Calu3 (cell line): ENCODE measurements at regions of chr3 and their contacts with region 1.

Region 1: GRCh38 chr3:135895106-135895733 is 70.3 kb upstream of the PPP2R3A start:
- DNase-seq: peak; percentile 90
- H3K4me3 Mint-ChIP-seq: no peak overlapping the region
- H3K27ac Mint-ChIP-seq: peak overlapping the region; percentile 70
- H3K4me1 Mint-ChIP-seq: peaks cover 27% of the 10 kb centered on the region
- H3K27me3 Mint-ChIP-seq: no peaks in the 10 kb centered on the region
- CTCF ChIP-seq: peak; percentile 95

Region 2: DNA sequence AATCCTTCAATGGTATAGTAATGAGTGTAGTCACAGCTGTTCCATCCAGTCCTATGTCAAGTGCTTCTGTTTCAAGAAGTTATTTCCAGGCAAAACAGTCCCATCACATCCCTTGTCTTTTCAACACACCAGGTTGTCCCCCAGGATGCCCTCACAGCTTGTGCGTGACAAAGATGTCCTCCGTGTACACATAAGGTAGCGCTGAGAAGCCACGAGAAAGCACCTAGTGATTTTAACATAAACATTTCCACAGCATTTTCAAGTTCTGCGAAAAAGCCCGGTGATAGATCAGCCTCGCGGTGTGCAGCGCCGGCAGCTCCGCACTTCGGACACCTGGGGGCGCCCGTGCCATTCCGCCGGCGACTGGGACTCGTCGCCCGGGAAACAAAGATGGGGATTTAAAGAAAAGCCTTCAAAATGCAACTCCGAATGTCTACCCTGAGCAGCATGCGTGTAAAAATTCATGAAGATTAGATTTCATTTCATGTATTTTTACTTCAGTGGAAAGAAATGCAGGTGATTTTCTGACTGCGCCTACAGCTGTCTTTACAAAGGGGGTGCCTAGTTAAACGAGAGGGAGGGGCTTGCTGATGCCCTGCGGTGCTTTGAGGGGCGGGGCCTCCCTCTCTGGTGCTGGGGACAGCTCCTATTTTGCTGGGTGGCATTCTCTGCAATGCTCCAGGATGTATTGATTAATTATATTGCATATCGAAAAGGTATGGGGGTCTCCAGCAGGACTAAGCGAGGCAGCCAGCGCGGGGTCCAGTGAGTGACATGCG is 1294.3 kb before region 1 on chr3:
- CTCF ChIA-PET with region 1: no interaction called
- intact Hi-C with region 1: loop called (anchors 1 kb)
- DNase-seq: peak; percentile 94
- H3K4me3 Mint-ChIP-seq: no peak overlapping the region
- H3K27ac Mint-ChIP-seq: no peak overlapping the region
- H3K4me1 Mint-ChIP-seq: no peaks in the 10 kb centered on the region
- H3K27me3 Mint-ChIP-seq: peaks cover 94% of the 10 kb centered on the region
- CTCF ChIP-seq: peak; percentile 99

Region 3: DNA sequence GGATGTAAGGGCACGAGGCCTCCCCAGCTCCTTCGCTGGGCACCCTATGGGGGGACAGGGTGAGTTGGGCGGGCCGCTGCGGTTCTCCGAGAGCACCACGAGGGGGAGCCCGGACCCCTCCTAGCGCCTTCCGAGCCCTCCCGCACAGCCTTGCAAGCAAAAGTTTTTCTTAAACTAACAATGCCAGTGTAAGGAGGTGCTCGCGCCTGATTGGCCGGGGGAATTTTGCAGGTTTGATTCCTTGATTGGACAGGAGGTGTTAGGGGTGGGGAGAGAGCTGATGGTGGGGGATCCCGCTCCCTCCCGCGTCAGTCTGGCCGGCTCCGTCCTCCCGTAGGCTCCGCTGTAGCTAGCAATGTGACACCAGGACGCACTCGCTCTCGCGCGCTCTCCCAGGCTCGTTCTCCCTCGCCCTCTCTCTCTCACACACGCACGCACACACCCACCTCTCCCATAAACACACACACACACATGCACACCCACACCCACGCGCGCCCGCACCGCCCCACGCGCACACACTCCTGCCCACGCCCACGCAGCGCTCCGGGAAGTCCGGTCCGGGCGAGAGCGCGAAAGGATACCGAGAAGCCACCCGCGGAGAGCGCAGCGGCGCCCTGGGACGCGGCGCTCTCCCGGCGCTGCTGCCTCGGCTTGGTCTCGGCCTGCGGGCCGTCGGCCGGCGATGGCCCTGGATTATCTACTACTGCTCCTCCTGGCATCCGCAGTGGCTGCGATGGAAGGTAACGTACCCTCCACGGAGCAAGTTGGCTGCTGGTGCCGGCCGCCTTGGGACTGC is 1100.1 kb before region 1 on chr3 and contains the start of gene EPHB1:
- CTCF ChIA-PET with region 1: interaction called, 3 read pairs
- intact Hi-C with region 1: loop called (anchors 1 kb)
- DNase-seq: peak; percentile 92
- H3K4me3 Mint-ChIP-seq: peak within 1 kb of the TSS; percentile 91
- H3K27ac Mint-ChIP-seq: peak within 1 kb of the TSS; percentile 26
- H3K4me1 Mint-ChIP-seq: peaks cover 14% of the 10 kb centered on the region
- H3K27me3 Mint-ChIP-seq: peaks cover 89% of the 10 kb centered on the region
- CTCF ChIP-seq: peak; percentile 99
- total RNA-seq, gene EPHB1: 0.73 and 0.81 TPM in 2 replicates

Region 4: DNA sequence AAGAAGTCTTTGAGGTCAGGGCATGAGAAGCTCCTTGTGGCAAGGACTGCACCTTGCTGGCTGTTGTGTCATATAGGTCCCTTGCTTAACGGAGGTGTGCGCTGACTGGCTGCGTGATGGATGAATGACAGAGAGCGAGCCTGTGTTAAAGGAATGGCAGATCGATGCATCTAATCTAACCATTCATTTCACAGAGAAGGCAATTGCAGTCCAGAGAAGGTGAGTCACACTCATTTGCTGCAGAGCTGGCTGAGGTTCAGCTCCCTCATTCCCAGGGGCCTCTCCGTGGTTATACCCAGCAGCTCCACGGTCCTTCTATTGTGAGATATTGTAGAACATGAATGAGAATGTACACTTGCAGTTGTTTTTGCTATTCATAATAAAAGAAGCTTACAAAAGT is 810.8 kb before region 1 on chr3:
- CTCF ChIA-PET with region 1: no interaction called
- intact Hi-C with region 1: loop called (anchors 10 kb)
- DNase-seq: peak; percentile 50
- H3K4me3 Mint-ChIP-seq: no peak overlapping the region
- H3K27ac Mint-ChIP-seq: no peak overlapping the region
- H3K4me1 Mint-ChIP-seq: no peaks in the 10 kb centered on the region
- H3K27me3 Mint-ChIP-seq: peaks cover 38% of the 10 kb centered on the region
- CTCF ChIP-seq: no peak

Region 5: GRCh38 chr3:135503760-135504686 is 391.2 kb before region 1 on chr3:
- CTCF ChIA-PET with region 1: no interaction called
- intact Hi-C with region 1: loop called (anchors 10 kb)
- DNase-seq: peak; percentile 91
- H3K4me3 Mint-ChIP-seq: no peak overlapping the region
- H3K27ac Mint-ChIP-seq: no peak overlapping the region
- H3K4me1 Mint-ChIP-seq: peaks cover 8% of the 10 kb centered on the region
- H3K27me3 Mint-ChIP-seq: peaks cover 78% of the 10 kb centered on the region
- CTCF ChIP-seq: peak; percentile 54

Region 6: GRCh38 chr3:135736740-135737139 is 158.5 kb before region 1 on chr3:
- CTCF ChIA-PET with region 1: interaction called, 3 read pairs
- intact Hi-C with region 1: loop called (anchors 1 kb)
- DNase-seq: peak; percentile 80
- H3K4me3 Mint-ChIP-seq: no peak overlapping the region
- H3K27ac Mint-ChIP-seq: no peak overlapping the region
- H3K4me1 Mint-ChIP-seq: no peaks in the 10 kb centered on the region
- H3K27me3 Mint-ChIP-seq: peaks cover 76% of the 10 kb centered on the region
- CTCF ChIP-seq: peak; percentile 86

Region 7: GRCh38 chr3:136042608-136043221 is 147.5 kb after region 1 on chr3:
- CTCF ChIA-PET with region 1: interaction called, 8 read pairs
- intact Hi-C with region 1: loop called (anchors 2 kb)
- DNase-seq: peak; percentile 34
- H3K4me3 Mint-ChIP-seq: no peak overlapping the region
- H3K27ac Mint-ChIP-seq: no peak overlapping the region
- H3K4me1 Mint-ChIP-seq: peaks cover 13% of the 10 kb centered on the region
- H3K27me3 Mint-ChIP-seq: no peaks in the 10 kb centered on the region
- CTCF ChIP-seq: peak; percentile 55